HEK293T (cell line): ENCODE measurements at regions of chr6 and their contacts with region 1.

Region 1: DNA sequence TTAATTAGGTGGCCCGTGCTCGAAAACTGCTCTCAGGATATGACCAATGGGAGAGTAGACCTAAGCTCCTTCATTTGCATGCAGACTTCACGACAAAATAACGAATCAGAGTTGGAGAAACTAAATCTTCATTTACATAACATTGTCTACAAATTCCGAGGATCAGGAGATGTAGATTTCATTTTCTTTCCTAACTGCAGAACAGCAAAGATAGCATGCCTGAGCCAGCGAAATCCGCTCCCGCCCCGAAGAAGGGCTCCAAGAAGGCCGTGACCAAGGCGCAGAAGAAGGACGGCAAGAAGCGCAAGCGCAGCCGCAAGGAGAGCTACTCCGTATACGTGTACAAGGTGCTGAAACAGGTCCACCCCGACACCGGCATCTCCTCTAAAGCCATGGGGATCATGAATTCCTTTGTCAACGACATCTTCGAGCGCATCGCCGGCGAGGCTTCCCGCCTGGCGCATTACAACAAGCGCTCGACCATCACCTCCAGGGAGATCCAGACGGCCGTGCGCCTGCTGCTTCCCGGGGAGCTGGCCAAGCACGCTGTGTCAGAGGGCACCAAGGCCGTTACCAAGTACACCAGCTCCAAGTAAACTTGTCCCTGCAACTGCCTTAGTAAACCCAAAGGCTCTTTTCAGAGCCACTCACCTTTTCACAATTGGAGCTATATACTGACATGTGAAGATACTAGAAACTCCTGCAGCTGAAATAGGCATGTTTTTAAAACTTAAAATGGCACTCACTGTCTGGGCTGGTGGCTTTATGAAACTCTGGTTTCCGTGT is 96.5 kb downstream of the HFE start:
- DNase-seq: no peak

Region 2: DNA sequence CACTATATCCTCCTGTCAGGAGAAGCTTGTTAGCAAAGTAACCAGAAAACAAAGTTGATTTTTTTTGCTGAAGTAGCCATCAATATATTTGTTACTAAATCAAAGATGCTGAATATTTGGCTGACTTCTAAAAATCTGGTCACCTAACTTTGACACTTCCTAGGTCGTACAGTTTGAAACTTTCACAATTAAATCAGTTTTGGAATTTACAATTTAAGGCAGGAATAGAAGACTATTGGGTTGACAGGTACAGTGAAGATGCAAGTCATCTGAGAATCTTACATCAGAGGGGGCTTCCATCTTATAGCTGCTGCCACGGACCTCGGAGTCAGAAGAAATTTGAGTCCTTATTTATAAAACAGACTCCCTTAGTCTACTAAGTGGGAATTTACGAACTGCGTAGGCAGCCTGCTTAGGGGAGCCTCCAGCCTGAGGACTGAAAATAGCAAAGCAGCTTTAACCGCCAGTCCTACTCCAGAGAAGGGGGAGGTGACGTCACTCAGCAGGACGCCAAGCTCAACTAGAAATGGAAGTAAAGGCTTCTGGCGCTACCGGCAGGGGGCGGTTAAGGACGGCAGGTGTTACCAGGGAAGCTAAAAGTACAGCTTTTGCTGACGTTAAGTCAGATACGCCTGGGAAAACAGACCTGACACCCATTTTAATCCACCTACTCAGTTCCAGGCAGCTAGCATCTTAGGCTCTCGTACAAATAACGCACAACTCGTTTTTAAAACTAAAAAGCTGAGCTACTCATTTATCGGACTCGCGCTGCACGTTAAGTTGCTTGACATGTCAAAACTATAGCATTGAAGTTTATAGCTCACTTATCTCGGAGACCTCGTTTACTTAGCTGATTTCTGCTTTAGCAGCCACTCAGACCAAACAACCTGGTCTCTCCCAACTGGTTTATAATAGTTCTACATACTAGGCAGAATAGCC is 157.6 kb before region 1 on chr6:
- CTCF ChIA-PET with region 1: no interaction called
- POLR2A ChIA-PET with region 1: interaction called, 14 read pairs
- DNase-seq: peak; percentile 55

Region 3: DNA sequence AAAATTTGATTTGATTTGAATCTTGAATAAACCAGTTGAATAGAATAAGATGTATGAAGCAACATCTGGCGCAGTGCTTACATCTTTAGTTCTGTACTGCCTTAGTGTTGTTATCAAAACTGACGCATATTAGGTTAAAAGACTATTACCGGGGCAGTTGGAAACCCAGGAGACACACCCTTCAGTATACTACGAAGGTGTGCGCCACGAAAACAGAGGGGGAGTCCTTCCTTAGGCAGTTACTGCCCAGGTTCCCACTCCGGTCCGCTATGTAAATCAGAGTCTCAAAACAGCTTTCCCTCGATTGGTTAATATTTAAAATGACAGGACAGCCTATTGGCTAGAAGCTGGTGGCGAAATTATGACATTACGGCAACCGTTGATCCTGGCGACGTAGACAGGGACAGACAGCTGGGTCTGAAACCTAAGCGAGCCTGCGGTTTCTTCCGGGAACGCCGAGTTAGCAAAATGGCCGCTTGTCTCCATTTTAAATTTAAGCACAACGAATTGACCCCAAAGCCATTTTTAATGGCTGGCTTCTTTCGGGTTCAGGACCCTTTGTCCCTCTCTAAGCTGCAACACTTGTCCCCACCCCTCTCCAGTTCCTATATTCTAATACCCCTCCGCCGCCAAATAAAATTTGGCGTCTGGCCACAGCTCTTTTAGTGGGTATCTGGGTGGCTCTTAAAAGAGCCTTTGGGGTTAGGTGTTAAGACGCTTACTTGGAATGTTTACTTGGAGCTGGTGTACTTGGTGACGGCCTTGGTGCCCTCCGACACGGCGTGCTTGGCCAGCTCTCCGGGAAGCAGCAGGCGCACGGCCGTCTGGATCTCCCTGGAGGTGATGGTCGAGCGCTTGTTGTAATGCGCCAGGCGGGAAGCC is 60.7 kb before region 1 on chr6:
- CTCF ChIA-PET with region 1: interaction called, 3 read pairs
- POLR2A ChIA-PET with region 1: interaction called, 68 read pairs
- DNase-seq: peak; percentile 71

Region 4: DNA sequence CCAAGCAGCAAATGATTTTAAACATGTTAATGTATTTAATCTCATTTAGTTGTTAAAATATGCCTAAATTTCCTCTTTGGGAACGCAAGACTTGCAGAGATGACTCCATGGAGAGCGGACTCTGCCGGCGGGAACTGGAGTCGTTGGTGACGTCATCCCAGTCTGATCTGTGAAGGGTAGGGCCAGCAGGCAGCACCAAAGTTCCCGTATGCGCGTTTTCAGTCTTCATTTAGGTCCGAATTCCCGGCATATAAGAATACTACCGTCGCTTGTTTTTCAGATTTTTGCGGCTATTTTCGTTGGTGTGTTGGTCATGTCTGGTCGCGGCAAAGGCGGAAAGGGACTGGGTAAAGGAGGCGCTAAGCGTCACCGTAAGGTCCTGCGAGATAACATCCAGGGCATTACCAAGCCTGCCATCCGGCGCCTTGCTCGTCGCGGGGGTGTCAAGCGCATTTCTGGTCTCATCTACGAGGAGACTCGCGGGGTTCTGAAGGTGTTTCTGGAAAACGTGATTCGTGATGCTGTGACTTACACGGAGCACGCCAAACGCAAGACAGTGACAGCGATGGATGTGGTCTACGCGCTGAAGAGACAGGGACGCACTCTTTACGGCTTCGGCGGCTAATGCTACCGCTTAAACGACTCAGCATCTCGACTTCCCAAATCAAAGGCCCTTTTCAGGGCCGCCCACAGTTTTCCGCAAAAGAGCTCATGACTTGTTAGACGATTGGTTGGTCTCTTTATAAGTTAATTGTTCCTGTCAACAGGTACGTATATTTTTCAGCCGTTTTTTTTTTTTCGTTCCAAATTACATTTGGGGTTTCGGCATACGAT is 20.8 kb after region 1 on chr6:
- CTCF ChIA-PET with region 1: interaction called, 5 read pairs
- POLR2A ChIA-PET with region 1: interaction called, 167 read pairs
- DNase-seq: peak; percentile 86

Region 5: GRCh38 chr6:26223650-26224546 is 40.1 kb after region 1 on chr6:
- CTCF ChIA-PET with region 1: no interaction called
- POLR2A ChIA-PET with region 1: interaction called, 10 read pairs
- DNase-seq: peak; percentile 63

Region 6: GRCh38 chr6:26249957-26250697 is 66.4 kb after region 1 on chr6:
- CTCF ChIA-PET with region 1: no interaction called
- POLR2A ChIA-PET with region 1: interaction called, 18 read pairs
- DNase-seq: no peak

Region 7: DNA sequence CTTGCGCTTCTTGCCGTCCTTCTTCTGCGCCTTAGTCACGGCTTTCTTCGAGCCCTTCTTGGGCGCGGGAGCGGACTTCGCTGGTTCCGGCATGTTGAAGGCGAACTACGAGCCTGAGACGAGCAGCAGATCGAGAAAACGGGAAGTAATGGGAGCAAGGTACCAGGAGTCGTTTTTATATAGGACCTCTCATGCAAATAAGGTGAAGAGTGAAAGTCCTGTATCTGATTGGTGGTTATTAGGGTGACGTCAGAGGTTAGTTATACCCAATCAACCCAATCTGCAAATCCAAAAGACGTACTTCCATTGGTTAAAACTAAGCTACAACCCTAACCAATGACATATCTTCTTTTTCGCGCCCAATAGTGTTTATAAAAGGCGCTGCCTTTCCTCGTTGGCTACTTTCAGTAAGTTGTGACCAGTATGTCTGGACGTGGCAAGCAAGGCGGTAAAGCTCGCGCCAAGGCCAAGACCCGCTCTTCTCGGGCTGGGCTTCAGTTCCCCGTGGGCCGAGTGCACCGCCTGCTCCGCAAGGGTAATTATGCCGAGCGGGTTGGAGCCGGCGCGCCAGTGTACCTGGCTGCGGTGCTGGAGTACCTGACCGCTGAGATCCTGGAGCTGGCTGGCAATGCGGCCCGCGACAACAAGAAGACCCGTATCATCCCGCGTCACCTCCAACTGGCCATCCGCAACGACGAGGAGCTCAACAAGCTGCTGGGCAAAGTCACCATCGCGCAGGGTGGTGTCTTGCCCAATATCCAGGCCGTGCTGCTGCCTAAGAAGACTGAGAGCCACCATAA is 963.1 kb after region 1 on chr6:
- CTCF ChIA-PET with region 1: no interaction called
- POLR2A ChIA-PET with region 1: interaction called, 14 read pairs
- DNase-seq: peak; percentile 84